HepG2 (cell line): ENCODE measurements at regions of chr5 and their contacts with region 1.

Region 1: DNA sequence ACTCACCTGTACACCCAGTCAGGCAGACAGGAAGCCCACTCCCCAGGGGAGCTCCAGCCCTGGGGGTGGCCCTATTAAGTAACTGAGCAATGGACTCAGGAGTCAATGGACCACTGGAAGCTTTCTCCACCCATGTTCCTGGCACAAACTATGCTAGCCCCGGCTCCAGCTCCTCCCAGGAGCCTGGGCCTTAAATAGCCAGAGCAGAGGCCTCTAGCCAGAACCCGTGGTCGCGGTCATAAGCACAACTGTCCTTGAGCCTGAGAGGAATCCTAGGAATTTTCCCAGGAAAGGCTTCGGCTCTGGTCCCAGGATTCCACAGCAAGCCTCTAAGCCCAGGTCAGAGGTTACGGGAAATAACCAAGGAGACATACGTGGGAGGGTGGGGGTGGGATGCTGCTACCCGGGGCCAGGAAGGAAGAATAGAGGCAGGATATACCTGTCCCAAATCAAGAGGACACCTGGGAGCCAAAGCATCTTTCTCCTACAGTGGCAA is 5.5 kb downstream of the SEPTIN8 start:
- DNase-seq: peak; percentile 90
- ATAC-seq: peak; percentile 83
- H3K4me3 ChIP-seq: peak overlapping the region in 1 of 3 experiments; percentile 49; a peak in 1 of 6 replicates
- H3K27ac ChIP-seq: peak overlapping the region; percentile 71
- H3K4me1 ChIP-seq: peaks cover 57% of the 10 kb centered on the region
- H3K27me3 ChIP-seq: no peaks in the 10 kb centered on the region
- CTCF ChIP-seq: no peak
- EP300 ChIP-seq: no peak
- POLR2A ChIP-seq: peak in 1 of 2 experiments; percentile 44; a peak in 1 of 4 replicates
- RAD21 ChIP-seq: no peak

Region 2: DNA sequence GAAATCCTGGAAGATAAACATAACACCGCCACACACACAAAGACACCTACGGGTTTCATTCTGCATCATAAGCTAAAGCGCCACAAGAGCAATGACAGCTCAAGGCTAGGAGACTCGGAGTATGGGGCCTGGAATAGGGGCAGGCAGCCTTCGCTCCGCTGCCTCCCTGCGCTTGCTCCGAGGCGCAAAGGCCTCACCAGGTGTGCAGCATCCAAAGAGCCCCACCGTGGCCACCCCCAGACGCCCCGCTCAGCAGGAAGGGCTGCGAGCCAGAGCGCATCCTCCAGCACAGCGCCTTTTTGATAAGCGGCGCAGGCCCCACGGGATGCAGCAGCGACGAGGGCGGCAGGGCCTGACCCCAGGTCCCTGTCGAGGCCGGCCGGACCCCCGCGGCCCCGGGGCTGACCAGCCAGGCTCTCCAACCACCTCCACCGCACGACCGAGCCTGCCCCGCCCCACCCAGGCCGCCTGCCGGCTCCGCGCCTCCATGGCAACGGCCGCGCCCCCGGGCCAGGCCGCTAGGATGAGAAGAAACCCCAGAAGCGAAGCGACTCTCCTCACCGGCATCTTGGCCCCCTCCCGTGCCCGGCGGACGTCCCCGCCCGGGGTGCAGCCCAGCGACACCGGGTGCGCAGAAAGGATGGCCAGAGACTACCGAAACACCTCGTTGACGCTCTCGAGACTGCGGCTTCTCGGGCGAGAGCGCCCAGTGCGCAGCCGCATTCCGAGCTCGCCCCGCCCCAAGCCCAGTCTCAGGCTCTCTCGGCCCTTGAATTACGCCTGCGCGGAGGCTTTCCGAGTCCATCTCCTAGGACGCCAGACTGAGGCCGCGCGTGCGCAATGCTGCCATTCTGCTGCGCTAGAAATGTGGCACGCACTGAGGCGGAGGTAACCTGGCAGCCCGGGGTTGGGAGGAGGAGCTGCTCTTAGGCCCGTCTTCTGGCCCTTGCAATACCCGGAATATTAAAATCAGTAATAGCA is 34.4 kb before region 1 on chr5 and contains the start of gene KIF3A:
- CTCF ChIA-PET with region 1: no interaction called
- POLR2A ChIA-PET with region 1: interaction called, 3 read pairs
- in situ Hi-C with region 1: no loop called
- intact Hi-C with region 1: loop called (anchors 2 kb)
- DNase-seq: peak; percentile 95
- ATAC-seq: peak; percentile 95
- H3K4me3 ChIP-seq: peak within 1 kb of the TSS; percentile 73 to 89 (median 82)
- H3K27ac ChIP-seq: peak within 1 kb of the TSS; percentile 39
- H3K4me1 ChIP-seq: peaks cover 28% of the 10 kb centered on the region
- H3K27me3 ChIP-seq: no peaks in the 10 kb centered on the region
- CTCF ChIP-seq: peak; percentile 22; the same call in 1 of the 2 replicates
- EP300 ChIP-seq: no peak
- POLR2A ChIP-seq: peak; percentile 49 to 55; a peak in 3 of 4 replicates
- RAD21 ChIP-seq: no peak
- total RNA-seq, gene KIF3A: 8.4 and 11.3 TPM in 2 replicates